Heart left ventricle (tissue), 16 donors: ENCODE measurements at regions of chr3 and their contacts with region 1.

Region 1: DNA sequence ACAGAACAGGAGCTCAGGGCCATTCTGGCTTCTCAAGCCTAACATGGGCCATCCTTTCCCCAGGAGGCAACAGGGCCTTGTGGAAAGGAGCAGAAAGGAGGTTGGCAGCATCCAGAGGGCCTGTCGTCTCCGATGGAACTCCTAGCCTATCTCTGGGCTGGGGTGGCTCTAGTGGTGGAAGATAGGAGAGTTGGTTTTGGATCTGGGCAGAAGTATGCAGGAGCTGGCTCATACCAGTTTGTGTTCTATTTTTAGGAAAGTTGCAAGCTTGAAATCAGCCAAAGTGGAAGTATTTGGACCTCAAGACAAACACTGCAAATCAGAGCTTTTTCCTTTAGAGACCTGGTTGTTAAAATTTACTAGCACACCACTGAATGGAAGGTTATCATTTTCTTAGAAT is 35.4 kb upstream of the XCR1 start:
- DNase-seq: peak in 3 of 5 donors; percentile 34 to 47 (median 46)
- ATAC-seq: peak; percentile 68 to 84 (median 74)
- H3K4me3 ChIP-seq: no peak overlapping the region
- H3K27ac ChIP-seq: peak overlapping the region in 5 of 12 donors; percentile 21 to 71 (median 53)
- H3K4me1 ChIP-seq: peaks cover 0 to 54% (median 24%) of the 10 kb centered on the region in 12 donors
- H3K27me3 ChIP-seq: peaks cover 0 to 7% (median 0%) of the 10 kb centered on the region in 9 donors
- CTCF ChIP-seq: peak in 1 of 12 donors; percentile 4
- POLR2A ChIP-seq: no peak

Region 2: GRCh38 chr3:45890405-45890804 is 172.3 kb before region 1 on chr3:
- intact Hi-C with region 1: no loop called
- DNase-seq: no peak
- ATAC-seq: no peak
- H3K4me3 ChIP-seq: no peak overlapping the region
- H3K27ac ChIP-seq: no peak overlapping the region
- H3K4me1 ChIP-seq: no peaks in the 10 kb centered on the region
- H3K27me3 ChIP-seq: peaks cover 0 to 3% (median 0%) of the 10 kb centered on the region in 9 donors
- CTCF ChIP-seq: no peak
- POLR2A ChIP-seq: no peak

Region 3: DNA sequence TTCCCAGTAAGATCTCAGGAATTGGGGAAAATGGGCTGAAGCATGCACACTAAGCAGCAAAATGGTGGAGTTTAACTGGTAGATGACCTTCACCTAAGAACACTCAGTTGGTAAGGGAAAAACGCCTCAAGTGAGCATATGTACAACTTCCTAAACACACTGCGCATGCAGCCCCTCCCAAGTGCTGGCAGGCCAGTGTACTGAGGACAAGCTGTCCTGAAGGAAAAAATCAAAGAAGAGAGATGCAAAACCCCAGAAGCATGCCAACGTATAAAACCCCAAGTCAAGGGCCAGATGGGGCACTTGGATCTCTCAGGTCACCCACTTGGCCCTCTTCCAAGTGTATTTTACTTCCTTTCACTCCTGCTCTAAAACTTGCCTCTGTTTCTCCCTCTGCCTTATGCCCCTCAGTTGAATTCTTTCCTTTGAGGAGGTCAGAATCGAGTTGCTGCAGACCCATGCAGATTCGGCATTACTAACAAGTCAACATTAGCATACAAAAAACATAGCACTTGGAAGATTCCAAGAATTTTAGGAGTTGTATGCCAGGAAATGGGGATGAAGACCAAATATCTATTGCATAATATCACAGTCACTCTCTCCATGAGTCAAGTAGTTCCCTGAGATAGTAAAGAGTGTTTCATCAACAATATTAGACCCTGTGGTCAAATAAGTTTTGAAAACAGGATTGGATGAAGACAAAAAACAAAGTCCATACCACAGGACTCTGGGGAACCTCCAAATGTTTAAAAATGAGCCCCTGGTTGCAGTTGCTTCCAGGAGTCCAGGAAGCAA is 56.2 kb before region 1 on chr3:
- intact Hi-C with region 1: loop called in 1 of 10 experiments (anchors 5 kb)
- DNase-seq: no peak
- ATAC-seq: peak; percentile 20 to 86 (median 64)
- H3K4me3 ChIP-seq: no peak overlapping the region
- H3K27ac ChIP-seq: peak overlapping the region in 8 of 12 donors; percentile 2 to 60 (median 35)
- H3K4me1 ChIP-seq: peaks cover 0 to 17% (median 10%) of the 10 kb centered on the region in 12 donors
- H3K27me3 ChIP-seq: no peaks in the 10 kb centered on the region
- CTCF ChIP-seq: no peak
- POLR2A ChIP-seq: no peak